Motor neuron (in vitro differentiated cells): ENCODE measurements at regions of chr14 and their contacts with region 1.

Region 1: GRCh38 chr14:92686900-92687444 is 61.5 kb downstream of the LGMN start:
- ATAC-seq: peak; percentile 75 to 93 (median 86)
- H3K4me3 ChIP-seq: peak overlapping the region; percentile 26 to 38 (median 31)
- H3K27ac ChIP-seq: no peak overlapping the region
- H3K4me1 ChIP-seq: no peaks in the 10 kb centered on the region

Region 2: GRCh38 chr14:92135267-92135666 is 551.7 kb before region 1 on chr14:
- in situ Hi-C with region 1: loop called in 1 of 9 experiments (anchors 25 kb)
- ATAC-seq: peak in 3 of 8 experiments; percentile 46 to 80 (median 54)
- H3K4me3 ChIP-seq: no peak overlapping the region
- H3K27ac ChIP-seq: no peak overlapping the region
- H3K4me1 ChIP-seq: no peaks in the 10 kb centered on the region

Region 3: DNA sequence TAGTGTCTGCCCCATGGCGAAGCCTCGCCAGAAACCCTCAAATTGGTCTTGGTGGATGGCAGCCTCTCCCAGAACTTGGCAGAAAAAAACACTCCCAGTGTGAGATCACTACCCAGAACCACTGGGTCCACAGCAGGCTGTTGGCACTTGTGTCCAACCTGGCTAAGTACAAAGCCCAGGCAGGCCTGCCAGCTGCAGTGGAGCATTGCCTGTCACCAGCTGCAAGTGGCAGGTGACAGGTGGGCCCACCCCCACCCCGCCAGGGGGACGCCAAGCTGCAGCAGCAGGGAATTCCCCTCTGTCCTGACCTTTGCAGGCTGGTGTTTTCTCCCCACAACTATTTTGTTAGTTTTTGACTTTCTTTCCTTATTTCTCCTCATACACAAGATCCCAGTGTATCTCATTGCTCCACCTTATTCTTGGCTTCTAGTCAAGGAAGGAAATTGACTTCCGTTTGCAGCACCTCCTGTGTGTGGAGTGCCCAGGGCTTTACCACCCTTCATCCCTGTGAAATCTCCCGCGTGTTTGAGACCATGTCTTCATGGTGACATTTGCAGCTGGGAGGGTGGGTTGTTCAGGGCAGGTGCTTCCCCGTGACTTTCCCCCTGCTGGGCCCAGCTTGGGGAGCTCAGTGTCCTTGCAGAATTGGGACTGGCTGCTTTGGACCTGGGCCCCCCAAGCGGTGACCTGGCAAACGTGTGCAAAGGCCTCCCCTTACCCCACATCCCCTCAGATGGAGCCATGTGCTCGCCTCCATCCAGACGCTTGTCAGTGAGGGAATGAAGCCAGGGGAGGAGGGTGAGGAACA is 247.2 kb before region 1 on chr14:
- in situ Hi-C with region 1: no loop called
- ATAC-seq: no peak
- H3K4me3 ChIP-seq: no peak overlapping the region
- H3K27ac ChIP-seq: no peak overlapping the region
- H3K4me1 ChIP-seq: no peaks in the 10 kb centered on the region

Region 4: DNA sequence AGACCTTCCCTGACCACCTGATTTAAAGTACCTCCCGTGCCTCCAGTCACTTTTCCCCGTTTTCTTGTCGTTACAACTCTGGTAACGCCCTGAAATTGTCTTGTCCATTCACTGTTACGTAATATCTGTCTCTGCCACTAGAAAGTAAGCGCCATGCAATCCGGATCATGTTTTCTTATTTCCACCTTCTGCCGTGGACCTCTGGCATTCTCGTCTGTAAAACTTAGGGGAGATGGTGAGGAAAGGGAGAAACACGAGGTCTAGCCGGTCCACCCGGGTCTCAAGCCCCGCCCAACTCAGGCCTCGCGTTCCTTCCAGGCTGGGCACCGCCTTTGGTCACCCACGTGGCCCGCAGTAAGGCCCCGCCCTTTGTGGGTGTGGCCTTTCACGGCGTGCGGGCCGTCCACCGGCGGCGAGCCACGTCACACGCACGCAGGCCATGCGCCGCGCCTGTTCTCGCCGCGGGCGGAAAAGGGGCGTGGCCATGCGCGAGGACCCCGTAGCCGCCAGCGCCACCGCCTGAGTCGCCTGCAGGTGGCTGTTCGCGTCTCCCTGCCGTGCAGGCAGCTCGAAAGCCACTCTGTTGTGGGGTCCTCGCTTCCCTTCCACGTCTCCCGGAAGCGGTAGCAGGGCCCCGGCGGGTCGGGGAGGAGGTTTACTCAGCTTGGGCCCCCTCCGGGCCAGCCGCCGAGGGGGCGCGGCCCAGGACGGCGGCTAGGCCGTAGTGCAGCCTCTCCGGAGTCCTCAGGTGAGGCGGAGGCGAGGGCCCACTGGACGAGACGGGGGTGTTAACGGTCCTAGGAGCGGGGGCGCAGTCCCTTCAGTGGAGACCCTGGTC is 107.0 kb after region 1 on chr14 and contains the start of gene GOLGA5:
- in situ Hi-C with region 1: loop called in 1 of 9 experiments (anchors 25 kb)
- ATAC-seq: peak; percentile 88 to 98 (median 91)
- H3K4me3 ChIP-seq: peak within 1 kb of the TSS; percentile 63 to 75 (median 65)
- H3K27ac ChIP-seq: peak within 1 kb of the TSS; percentile 93 to 98
- H3K4me1 ChIP-seq: peaks cover 16 to 23% of the 10 kb centered on the region in 2 donors
- total RNA-seq, gene GOLGA5: 28.1 to 67.3 (median 43.5) TPM